ENCODE measurements at regions of chr1 and their contacts with region 1.

Region 1: GRCh38 chr1:10378081-10378841 is 20.6 kb upstream of the PGD start:
- DNase-seq: peak; percentile 86
- ATAC-seq: peak; percentile 80 to 84
- H3K4me3 ChIP-seq: no peak overlapping the region
- H3K27ac ChIP-seq: peak overlapping the region; percentile 42
- H3K4me1 ChIP-seq: peaks cover 11% of the 10 kb centered on the region
- H3K27me3 ChIP-seq: no peaks in the 10 kb centered on the region
- CTCF ChIP-seq: no peak

Region 2: GRCh38 chr1:10429868-10430215 is 51.6 kb after region 1 on chr1:
- intact Hi-C with region 1: loop called (anchors 10 kb)
- DNase-seq: no peak
- ATAC-seq: peak; percentile 2 to 5
- H3K4me3 ChIP-seq: peak overlapping the region; percentile 87
- H3K27ac ChIP-seq: peak overlapping the region; percentile 70
- H3K4me1 ChIP-seq: peaks cover 17% of the 10 kb centered on the region
- H3K27me3 ChIP-seq: no peaks in the 10 kb centered on the region
- CTCF ChIP-seq: no peak